SK-N-SH (cell line): ENCODE measurements at regions of chr6 and their contacts with region 1.

Region 1: DNA sequence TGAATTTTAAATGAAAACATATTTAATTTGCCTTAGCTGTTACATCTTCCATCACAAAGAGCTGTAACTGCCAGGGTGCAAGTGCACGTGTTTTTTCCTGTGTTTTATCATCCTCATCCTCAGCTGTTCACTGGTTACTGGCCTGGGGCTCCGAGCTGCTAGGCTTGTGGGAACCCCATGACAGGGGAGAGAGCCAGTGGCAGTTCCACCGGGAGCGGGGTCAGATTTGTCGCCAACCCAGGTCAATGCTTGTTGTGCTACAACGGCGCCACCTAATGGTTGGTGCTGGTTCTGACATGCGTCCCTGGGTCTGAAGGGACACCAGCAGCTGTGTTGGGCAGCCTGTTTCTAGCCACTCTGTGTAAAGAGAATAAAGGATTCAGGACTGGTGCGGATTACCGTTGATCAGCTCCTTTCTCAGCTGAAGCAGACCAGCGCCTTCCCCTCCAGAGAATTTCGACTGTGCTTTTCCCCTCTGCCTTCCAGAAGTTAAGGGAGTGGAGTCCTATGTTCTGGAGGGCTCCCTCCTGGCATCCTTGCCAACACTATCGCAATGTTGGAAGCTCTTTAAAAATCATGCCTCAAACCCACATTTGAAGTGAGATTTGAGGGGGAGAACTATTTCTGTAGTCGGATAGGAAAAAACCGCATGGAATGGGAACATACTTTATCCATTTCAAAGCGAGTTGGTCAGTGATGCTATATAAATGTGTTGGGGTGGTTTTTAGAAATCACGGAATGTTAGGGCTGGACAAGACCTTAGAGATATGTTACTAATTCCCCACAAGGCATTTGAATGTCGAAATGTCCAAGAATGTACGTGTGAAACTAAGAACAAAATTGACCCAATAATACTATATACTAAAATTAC is 32.1 kb downstream of the SUMO4 start:
- DNase-seq: peak; percentile 92
- H3K4me3 ChIP-seq: peak overlapping the region; percentile 7 to 50; a peak in 2 of 4 replicates
- H3K27ac ChIP-seq: no peak overlapping the region
- H3K4me1 ChIP-seq: peaks cover 0 to 2% of the 10 kb centered on the region in 2 experiments; a peak in 1 of 4 replicates
- H3K27me3 ChIP-seq: no peaks in the 10 kb centered on the region
- CTCF ChIP-seq: peak; percentile 85
- EP300 ChIP-seq: no peak
- RAD21 ChIP-seq: peak; percentile 99

Region 2: GRCh38 chr6:149043476-149044130 is 388.5 kb before region 1 on chr6:
- CTCF ChIA-PET with region 1: interaction called, 25 read pairs
- POLR2A ChIA-PET with region 1: no interaction called
- DNase-seq: peak; percentile 65
- H3K4me3 ChIP-seq: no peak overlapping the region
- H3K27ac ChIP-seq: no peak overlapping the region
- H3K4me1 ChIP-seq: no peaks in the 10 kb centered on the region; a peak in 1 of 4 replicates
- H3K27me3 ChIP-seq: no peaks in the 10 kb centered on the region
- CTCF ChIP-seq: peak; percentile 51
- EP300 ChIP-seq: no peak
- RAD21 ChIP-seq: peak; percentile 40

Region 3: DNA sequence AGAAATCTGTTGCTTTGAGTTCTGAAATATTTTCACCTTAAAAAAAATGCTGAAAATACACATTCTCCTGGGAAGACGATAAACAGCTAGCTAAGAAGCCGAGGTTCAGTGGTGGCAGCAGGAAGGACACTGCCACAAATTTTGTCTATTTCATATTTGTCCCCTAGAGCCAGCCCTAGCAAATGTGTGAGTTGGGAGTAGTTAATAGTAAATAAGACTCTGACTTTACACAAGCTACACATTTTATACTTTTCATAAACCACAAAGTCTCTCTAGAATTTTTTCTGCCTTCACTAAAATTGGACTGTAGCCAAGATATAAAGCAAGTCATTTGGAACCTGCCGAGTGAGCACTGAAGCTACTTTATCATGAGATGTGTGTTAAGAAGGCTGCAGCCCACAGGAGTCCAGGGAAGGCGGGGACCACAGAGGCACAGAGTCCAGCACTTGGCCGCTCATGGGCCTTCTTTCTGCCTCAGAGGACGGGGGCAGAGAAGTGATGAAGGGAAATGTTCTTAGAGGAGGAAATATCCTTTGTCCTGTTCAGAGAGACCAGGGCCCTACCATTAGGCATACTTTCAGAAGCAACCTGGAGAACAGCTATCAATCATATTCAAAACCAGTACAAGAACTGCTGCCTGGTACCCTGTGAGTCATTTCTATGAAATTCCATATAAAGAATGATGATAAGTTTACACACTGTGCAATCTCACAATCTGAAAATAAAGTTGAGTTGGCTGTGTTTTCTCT is 356.4 kb before region 1 on chr6:
- CTCF ChIA-PET with region 1: interaction called, 55 read pairs
- POLR2A ChIA-PET with region 1: no interaction called
- DNase-seq: no peak
- H3K4me3 ChIP-seq: no peak overlapping the region
- H3K27ac ChIP-seq: peak overlapping the region; percentile 64 to 71; a peak in 3 of 4 replicates
- H3K4me1 ChIP-seq: peaks cover 12 to 16% of the 10 kb centered on the region in 2 experiments
- H3K27me3 ChIP-seq: no peaks in the 10 kb centered on the region
- CTCF ChIP-seq: no peak
- EP300 ChIP-seq: peak; percentile 15 to 44; a peak in 1 of 4 replicates
- RAD21 ChIP-seq: no peak

Region 4: DNA sequence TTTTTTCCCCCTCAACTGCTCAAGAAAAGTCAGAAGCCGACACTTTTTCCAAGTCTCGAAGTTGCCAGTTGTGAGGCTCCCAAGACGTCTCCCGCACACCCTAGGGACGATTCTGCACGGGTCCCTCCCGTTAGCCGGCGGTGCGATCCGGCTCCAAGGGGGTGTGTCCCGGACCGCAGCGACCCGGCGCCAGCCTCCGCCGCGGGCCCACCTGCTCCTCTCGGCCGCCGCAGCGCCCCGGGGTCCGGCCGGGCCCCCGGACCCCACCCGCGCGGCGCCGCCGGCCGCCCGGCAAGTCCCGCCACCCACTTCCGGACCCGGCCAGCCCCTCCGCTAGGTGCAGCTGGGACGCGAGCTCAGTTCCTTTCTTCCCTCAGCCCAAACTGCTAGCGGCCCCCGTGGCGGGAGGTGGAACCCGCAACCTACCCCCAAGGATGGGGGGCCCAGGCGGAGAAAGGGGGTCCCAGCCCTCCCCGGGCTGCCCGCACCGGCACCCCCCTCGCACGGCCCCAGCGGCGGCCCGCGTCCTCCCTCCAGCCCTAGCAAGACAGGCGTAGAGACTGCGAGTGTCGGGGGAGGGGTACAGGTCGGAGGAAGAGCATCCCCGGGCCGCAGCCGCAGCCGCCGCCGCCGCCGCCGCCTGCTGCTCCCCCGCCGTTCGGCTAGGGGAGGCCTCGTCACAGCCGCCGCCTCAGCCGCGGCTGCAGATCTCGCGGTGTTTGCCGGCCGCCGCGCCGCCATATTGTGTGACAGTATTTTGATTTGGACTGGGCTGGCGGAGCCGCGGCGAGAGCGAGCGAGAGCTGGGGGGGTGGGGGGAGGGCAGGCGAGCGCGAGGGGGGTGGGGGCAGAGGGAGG is 115.1 kb before region 1 on chr6:
- CTCF ChIA-PET with region 1: interaction called, 19 read pairs
- POLR2A ChIA-PET with region 1: interaction called, 4 read pairs
- DNase-seq: peak; percentile 93
- H3K4me3 ChIP-seq: peak overlapping the region; percentile 81 to 89
- H3K27ac ChIP-seq: peak overlapping the region; percentile 94 to 99
- H3K4me1 ChIP-seq: peaks cover 4 to 8% of the 10 kb centered on the region in 2 experiments; a peak in 2 of 4 replicates
- H3K27me3 ChIP-seq: no peaks in the 10 kb centered on the region
- CTCF ChIP-seq: peak; percentile 23; the same call in 1 of the 2 replicates
- EP300 ChIP-seq: peak in 1 of 2 experiments; percentile 17; a peak in 1 of 4 replicates
- RAD21 ChIP-seq: no peak

Region 5: DNA sequence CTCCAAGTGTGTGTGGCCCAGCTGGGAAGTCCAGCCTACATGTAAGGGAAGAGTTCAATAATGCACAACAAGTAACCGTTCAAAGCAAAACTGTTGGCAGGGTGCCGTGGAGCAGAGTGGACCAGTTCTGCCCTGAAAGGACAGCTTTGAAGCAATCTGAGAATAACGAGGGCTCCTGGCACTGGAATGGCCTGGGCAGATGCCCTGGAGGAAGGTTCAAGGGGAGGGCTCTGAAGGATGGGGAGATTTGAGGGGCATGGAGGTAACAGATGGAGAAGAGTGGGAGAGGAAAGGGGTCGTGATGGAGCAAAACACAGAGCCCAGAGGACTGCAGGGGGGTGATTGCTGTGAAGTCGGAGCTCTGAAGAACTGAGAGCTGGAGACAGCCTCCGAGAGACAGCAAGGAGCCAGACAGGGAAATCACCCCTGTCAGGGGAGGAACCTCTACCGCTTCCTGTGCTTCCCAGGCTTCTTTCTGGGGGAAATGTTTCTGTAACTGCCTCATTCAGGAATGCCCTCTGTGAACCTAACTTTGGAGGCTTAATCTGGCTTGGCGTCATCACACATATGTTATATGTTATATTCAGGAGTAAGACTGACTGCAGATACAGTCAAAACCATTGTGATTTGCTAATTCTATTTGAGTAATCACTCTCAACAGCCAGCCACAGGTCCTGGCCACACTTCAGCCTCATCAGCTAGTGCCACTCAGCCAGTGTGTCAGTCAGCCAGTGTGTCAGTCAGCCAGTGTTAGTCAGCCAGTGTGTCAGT is 11.5 kb after region 1 on chr6:
- CTCF ChIA-PET with region 1: interaction called, 25 read pairs
- POLR2A ChIA-PET with region 1: no interaction called
- DNase-seq: no peak
- H3K4me3 ChIP-seq: no peak overlapping the region
- H3K27ac ChIP-seq: no peak overlapping the region
- H3K4me1 ChIP-seq: peaks cover 0 to 3% of the 10 kb centered on the region in 2 experiments; a peak in 1 of 4 replicates
- H3K27me3 ChIP-seq: no peaks in the 10 kb centered on the region
- CTCF ChIP-seq: no peak
- EP300 ChIP-seq: no peak
- RAD21 ChIP-seq: no peak

Region 6: GRCh38 chr6:149642829-149643580 is 210.9 kb after region 1 on chr6:
- CTCF ChIA-PET with region 1: no interaction called
- POLR2A ChIA-PET with region 1: no interaction called
- DNase-seq: no peak
- H3K4me3 ChIP-seq: no peak overlapping the region
- H3K27ac ChIP-seq: no peak overlapping the region
- H3K4me1 ChIP-seq: no peaks in the 10 kb centered on the region; a peak in 1 of 4 replicates
- H3K27me3 ChIP-seq: no peaks in the 10 kb centered on the region
- CTCF ChIP-seq: no peak
- EP300 ChIP-seq: no peak
- RAD21 ChIP-seq: no peak